CD8-positive, alpha-beta T cell (primary cell): ENCODE measurements at regions of chrX and their contacts with region 1.

Region 1: DNA sequence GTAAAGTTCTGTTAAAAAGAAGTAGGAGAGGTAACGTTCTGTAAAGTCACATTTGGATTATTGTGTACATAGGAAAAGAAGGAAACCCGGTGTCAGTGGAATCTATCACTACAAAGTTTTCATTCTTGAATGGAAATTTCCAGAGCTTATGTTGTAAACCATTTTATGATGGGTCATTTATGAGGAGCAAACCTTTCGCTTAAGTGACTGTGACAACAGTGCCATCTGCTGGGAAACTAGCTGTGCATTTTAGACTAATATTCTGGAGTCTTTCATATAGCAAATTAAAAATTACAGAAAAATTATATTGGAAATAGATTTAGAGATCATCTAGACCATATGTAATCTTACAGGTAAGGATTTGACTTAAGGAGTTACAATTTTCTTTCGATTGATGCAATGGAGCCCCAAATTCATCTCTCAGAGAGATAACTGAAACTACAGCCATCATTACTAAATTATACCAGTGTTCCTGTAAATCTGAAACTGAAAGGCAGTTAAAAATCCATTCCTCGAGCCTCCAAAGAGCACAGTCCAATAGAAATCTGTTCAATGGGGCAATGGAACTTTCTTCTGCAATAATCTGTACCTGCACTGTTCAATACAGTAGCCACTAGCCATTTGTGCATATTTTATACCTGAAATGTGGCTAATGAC is 26.9 kb downstream of the ASB9 start:
- DNase-seq: peak in 8 of 9 experiments; percentile 16 to 63 (median 35)
- ATAC-seq: no peak
- H3K4me3 ChIP-seq: no peak overlapping the region
- H3K4me3 Mint-ChIP-seq: no peak overlapping the region
- H3K27ac ChIP-seq: no peak overlapping the region
- H3K27ac Mint-ChIP-seq: no peak overlapping the region
- H3K4me1 ChIP-seq: no peaks in the 10 kb centered on the region
- H3K4me1 Mint-ChIP-seq: no peaks in the 10 kb centered on the region
- H3K27me3 ChIP-seq: no peaks in the 10 kb centered on the region
- H3K27me3 Mint-ChIP-seq: no peaks in the 10 kb centered on the region
- CTCF ChIP-seq: peak; percentile 56

Region 2: DNA sequence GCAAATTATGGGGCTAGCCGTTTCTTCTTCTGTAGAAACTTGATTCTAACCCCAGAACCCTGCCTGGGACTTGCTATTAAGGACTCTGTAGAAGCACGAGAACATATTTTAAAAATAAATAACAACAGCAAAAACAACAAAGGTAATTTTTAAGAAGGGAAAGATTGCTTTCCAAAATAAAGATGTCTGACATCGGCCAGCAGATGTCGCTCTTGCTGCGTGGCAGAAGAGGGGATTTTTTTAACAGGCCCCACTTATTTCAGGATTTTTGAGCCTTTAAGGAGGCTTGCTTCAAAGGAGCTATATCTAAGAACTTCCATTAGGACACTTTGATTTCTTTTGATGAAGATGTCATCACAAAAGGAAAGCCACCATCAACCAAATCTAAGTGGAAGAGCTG is 1736.5 kb before region 1 on chrX:
- CTCF ChIA-PET with region 1: no interaction called
- POLR2A ChIA-PET with region 1: no interaction called
- intact Hi-C with region 1: loop called (anchors 1 to 5 kb)
- DNase-seq: peak in 8 of 9 experiments; percentile 13 to 70 (median 56)
- ATAC-seq: no peak
- H3K4me3 ChIP-seq: no peak overlapping the region
- H3K4me3 Mint-ChIP-seq: no peak overlapping the region
- H3K27ac ChIP-seq: no peak overlapping the region
- H3K27ac Mint-ChIP-seq: no peak overlapping the region
- H3K4me1 ChIP-seq: no peaks in the 10 kb centered on the region
- H3K4me1 Mint-ChIP-seq: peaks cover 2% of the 10 kb centered on the region
- H3K27me3 ChIP-seq: no peaks in the 10 kb centered on the region
- H3K27me3 Mint-ChIP-seq: no peaks in the 10 kb centered on the region
- CTCF ChIP-seq: peak; percentile 65

Region 3: GRCh38 chrX:14039344-14039743 is 1203.7 kb before region 1 on chrX:
- CTCF ChIA-PET with region 1: interaction called, 4 read pairs
- POLR2A ChIA-PET with region 1: no interaction called
- intact Hi-C with region 1: loop called (anchors 1 kb)
- DNase-seq: peak; percentile 5 to 74 (median 57)
- ATAC-seq: peak; percentile 82
- H3K4me3 ChIP-seq: no peak overlapping the region
- H3K4me3 Mint-ChIP-seq: no peak overlapping the region
- H3K27ac ChIP-seq: no peak overlapping the region
- H3K27ac Mint-ChIP-seq: no peak overlapping the region
- H3K4me1 ChIP-seq: no peaks in the 10 kb centered on the region
- H3K4me1 Mint-ChIP-seq: no peaks in the 10 kb centered on the region
- H3K27me3 ChIP-seq: no peaks in the 10 kb centered on the region
- H3K27me3 Mint-ChIP-seq: no peaks in the 10 kb centered on the region
- CTCF ChIP-seq: peak; percentile 64

Region 4: GRCh38 chrX:14095702-14096101 is 1147.3 kb before region 1 on chrX:
- CTCF ChIA-PET with region 1: interaction called, 4 read pairs
- POLR2A ChIA-PET with region 1: no interaction called
- intact Hi-C with region 1: loop called (anchors 1 kb)
- DNase-seq: peak in 8 of 9 experiments; percentile 1 to 57 (median 20)
- ATAC-seq: peak; percentile 55
- H3K4me3 ChIP-seq: no peak overlapping the region
- H3K4me3 Mint-ChIP-seq: peak overlapping the region; percentile 12
- H3K27ac ChIP-seq: no peak overlapping the region
- H3K27ac Mint-ChIP-seq: no peak overlapping the region
- H3K4me1 ChIP-seq: no peaks in the 10 kb centered on the region
- H3K4me1 Mint-ChIP-seq: peaks cover 2% of the 10 kb centered on the region
- H3K27me3 ChIP-seq: no peaks in the 10 kb centered on the region
- H3K27me3 Mint-ChIP-seq: no peaks in the 10 kb centered on the region
- CTCF ChIP-seq: peak; percentile 42

Region 5: DNA sequence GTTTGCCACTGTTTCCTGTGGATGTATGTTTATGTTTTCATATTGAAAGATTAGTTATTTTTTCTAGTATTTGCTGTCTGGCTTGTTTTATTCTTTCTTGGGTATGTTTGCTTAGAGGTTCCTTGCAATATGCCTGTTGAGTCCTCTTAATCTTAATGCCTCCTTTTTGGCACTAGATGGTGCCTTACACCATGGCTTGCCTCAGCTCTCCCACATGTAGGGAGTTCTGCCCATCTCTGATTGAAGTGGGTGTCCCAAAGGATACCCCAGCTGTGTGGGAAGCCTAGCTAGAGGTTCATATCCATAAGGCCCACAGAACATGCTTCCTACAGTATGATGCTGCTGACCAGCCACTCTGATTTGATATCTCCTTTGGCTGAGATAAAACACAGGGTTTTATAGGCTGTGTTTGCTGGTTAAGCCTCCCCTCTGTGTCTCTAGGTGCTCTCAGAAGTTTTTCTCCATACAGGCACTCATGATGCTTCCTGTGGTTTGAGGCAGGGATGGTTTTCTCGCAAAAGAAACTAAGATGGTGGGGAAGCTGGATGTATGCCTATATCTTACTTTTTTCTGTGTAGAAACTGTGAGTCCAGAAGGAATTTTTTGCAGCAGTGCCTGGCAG is 135.5 kb before region 1 on chrX:
- CTCF ChIA-PET with region 1: interaction called, 3 read pairs
- POLR2A ChIA-PET with region 1: no interaction called
- intact Hi-C with region 1: loop called (anchors 1 to 2 kb)
- DNase-seq: peak in 2 of 9 experiments; percentile 23 to 38
- ATAC-seq: no peak
- H3K4me3 ChIP-seq: no peak overlapping the region
- H3K4me3 Mint-ChIP-seq: no peak overlapping the region
- H3K27ac ChIP-seq: no peak overlapping the region
- H3K27ac Mint-ChIP-seq: no peak overlapping the region
- H3K4me1 ChIP-seq: no peaks in the 10 kb centered on the region
- H3K4me1 Mint-ChIP-seq: peaks cover 15% of the 10 kb centered on the region
- H3K27me3 ChIP-seq: no peaks in the 10 kb centered on the region
- H3K27me3 Mint-ChIP-seq: peaks cover 3% of the 10 kb centered on the region
- CTCF ChIP-seq: no peak

Region 6: DNA sequence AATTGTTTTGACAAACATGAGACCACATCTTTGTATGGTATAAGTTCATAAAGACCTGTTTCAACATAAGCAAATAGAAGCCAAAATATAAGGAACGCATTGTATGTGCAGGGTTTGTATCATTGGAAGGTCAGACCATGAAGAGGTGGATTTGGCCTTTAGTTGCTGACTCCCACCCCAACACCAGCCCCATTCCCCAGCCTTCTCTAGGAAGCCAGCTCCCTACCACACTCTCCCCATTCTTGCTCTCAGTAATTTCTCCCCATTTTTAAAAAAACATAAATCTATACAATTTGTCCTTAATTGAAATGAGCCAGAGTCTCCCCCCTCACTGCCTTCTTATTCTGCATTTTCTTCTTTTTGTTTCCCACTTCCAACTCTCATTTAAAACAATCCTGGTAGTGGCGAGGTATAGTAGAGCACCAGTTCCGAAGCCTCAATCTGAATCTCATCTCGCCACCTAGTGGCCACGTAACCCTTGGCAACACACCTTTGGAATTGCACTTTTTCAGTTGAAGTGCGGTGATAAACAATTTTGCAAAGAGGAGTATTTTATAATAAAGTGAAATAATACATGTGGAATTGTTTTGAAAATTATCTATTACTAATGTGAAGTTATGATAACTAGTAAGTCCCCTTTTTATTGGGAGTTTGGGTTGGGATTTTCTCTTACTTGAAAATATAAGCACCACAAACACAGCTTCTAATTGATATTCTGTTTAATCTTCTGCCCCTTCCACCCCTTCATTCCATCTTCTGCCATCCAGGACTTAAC is 99.8 kb before region 1 on chrX:
- CTCF ChIA-PET with region 1: interaction called, 5 read pairs
- POLR2A ChIA-PET with region 1: no interaction called
- intact Hi-C with region 1: loop called in 1 of 2 experiments (anchors 1 kb)
- DNase-seq: peak; percentile 8 to 68 (median 56)
- ATAC-seq: peak; percentile 66
- H3K4me3 ChIP-seq: no peak overlapping the region
- H3K4me3 Mint-ChIP-seq: peak overlapping the region; percentile 50
- H3K27ac ChIP-seq: peak overlapping the region in 1 of 2 experiments; percentile 31
- H3K27ac Mint-ChIP-seq: peak overlapping the region; percentile 75
- H3K4me1 ChIP-seq: peaks cover 5% of the 10 kb centered on the region
- H3K4me1 Mint-ChIP-seq: peaks cover 17% of the 10 kb centered on the region
- H3K27me3 ChIP-seq: no peaks in the 10 kb centered on the region
- H3K27me3 Mint-ChIP-seq: no peaks in the 10 kb centered on the region
- CTCF ChIP-seq: peak; percentile 70